ENCODE measurements at regions of chr4 and their contacts with region 1.

Region 1: DNA sequence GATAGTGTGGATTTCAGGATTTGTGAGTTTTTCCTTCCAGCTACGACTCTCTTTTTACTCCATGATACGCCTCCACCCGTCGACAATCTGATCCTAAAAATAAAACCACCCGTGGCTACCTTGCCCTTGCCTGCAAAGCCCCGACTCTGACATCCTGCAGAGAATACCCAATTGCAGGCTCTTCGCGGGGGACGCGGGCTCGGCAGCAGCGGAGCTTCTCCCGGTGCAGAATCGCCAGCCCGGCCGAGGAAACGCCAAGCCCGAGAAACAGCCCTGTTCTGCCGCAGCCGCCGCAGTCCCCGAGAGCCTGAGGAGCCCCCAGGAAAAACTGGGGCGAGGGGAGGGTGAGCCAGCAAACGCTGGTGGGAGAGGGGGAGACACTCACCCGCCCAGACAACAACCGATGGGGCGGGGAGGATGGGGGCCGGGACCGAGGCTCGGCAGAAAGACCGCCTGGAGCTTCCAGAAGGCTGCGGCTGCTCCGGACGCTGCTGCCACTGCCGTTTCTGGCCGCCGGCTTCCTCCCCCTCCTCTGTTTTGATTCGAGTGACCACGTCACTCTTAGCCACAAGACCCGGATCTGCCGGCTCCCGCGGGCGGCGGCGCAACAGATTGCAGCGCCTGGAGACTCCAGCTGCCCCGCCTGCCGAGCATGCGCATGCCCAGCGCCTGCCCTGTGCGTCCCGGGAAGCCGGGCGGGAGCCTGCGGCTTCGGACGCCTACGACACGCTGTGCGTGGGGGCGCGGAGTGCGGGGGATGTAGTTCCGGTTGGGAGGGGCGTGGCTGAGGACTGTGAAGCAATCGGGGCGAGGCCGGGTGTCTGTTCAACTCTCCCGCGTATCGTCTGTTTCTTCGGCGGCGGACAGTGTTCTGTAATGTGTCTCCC is at the start of gene SMIM14:
- DNase-seq: peak; percentile 100
- H3K4me3 ChIP-seq: peak within 1 kb of the TSS; percentile 83 to 95 (median 90)
- H3K27ac ChIP-seq: peak within 1 kb of the TSS; percentile 96 to 100 (median 99)
- H3K4me1 ChIP-seq: peaks cover 2 to 23% (median 19%) of the 10 kb centered on the region in 4 donors
- H3K27me3 ChIP-seq: no peaks in the 10 kb centered on the region
- CTCF ChIP-seq: peak in 1 of 4 experiments; percentile 28
- EP300 ChIP-seq: peak in 2 of 4 donors; percentile 12 to 87
- POLR2A ChIP-seq: peak; percentile 90 to 93
- total RNA-seq, gene SMIM14: 16.6 to 33.9 (median 27.8) TPM

Region 2: GRCh38 chr4:39181905-39182638 is 456.5 kb before region 1 on chr4 and contains the start of gene WDR19:
- intact Hi-C with region 1: loop called (anchors 10 kb)
- DNase-seq: peak; percentile 99
- H3K4me3 ChIP-seq: peak within 1 kb of the TSS; percentile 64 to 83 (median 76)
- H3K27ac ChIP-seq: peak within 1 kb of the TSS; percentile 71 to 80 (median 79)
- H3K4me1 ChIP-seq: peaks cover 0 to 21% (median 14%) of the 10 kb centered on the region in 4 donors
- H3K27me3 ChIP-seq: no peaks in the 10 kb centered on the region
- CTCF ChIP-seq: peak; percentile 41 to 54 (median 46)
- EP300 ChIP-seq: peak in 1 of 4 donors; percentile 47
- POLR2A ChIP-seq: no peak
- total RNA-seq, gene WDR19: 49.9 to 62.0 (median 52.2) TPM

Region 3: GRCh38 chr4:39458505-39459300 is 179.9 kb before region 1 on chr4 and contains the starts of genes LIAS and RPL9:
- intact Hi-C with region 1: loop called (anchors 5 kb)
- DNase-seq: peak; percentile 99
- H3K4me3 ChIP-seq: peak within 1 kb of the TSS; percentile 70 to 79 (median 74)
- H3K27ac ChIP-seq: peak within 1 kb of the TSS; percentile 97 to 98 (median 98)
- H3K4me1 ChIP-seq: peaks cover 0 to 40% (median 36%) of the 10 kb centered on the region in 4 donors
- H3K27me3 ChIP-seq: no peaks in the 10 kb centered on the region
- CTCF ChIP-seq: no peak
- EP300 ChIP-seq: peak in 2 of 4 donors; percentile 46 to 83
- POLR2A ChIP-seq: peak; percentile 93 to 96
- total RNA-seq, gene LIAS: 16.1 to 24.8 (median 18.8) TPM
- total RNA-seq, gene RPL9: 4,848 to 14,511 (median 7,301) TPM

Region 4: DNA sequence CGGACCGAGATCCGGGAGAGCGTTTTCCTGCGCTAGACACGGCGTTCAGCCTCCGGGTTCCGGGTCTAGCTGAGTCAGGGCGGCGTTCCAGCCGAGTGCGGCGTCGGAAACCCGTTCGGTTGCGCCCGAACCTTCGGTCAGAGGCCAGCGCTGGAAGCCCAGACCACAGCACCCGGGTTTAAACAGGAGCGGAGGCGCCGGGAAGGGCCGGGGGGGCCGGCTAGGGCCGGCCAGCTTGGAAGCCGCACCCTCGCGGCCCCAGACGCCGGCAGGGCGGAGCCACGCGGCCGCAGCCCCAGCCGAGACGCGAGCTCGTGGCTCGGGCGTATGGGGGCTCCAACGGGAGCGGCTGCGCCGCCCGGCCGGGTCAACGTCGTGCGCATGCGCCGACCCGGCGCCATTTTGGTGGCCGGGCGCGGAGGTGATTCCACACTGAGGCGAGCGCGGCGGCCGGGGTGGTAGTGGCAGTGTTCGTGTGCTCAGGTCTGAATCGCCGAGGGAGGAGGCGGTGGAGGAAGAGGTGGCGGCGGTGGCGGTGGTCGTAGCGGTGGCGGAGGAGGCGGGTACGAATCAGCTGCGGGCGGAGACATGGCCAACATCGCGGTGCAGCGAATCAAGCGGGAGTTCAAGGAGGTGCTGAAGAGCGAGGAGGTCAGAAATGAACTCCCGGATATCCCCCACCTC is 59.3 kb after region 1 on chr4 and contains the start of gene UBE2K:
- intact Hi-C with region 1: loop called (anchors 2 kb)
- DNase-seq: peak; percentile 94
- H3K4me3 ChIP-seq: peak within 1 kb of the TSS; percentile 86 to 97 (median 88)
- H3K27ac ChIP-seq: peak within 1 kb of the TSS; percentile 93 to 96 (median 94)
- H3K4me1 ChIP-seq: peaks cover 0 to 50% (median 32%) of the 10 kb centered on the region in 4 donors
- H3K27me3 ChIP-seq: no peaks in the 10 kb centered on the region
- CTCF ChIP-seq: no peak
- EP300 ChIP-seq: no peak
- POLR2A ChIP-seq: peak; percentile 60 to 76
- total RNA-seq, gene UBE2K: 25.2 to 37.8 (median 31.4) TPM

Region 5: GRCh38 chr4:39713691-39714090 is 75.1 kb after region 1 on chr4:
- intact Hi-C with region 1: no loop called
- DNase-seq: no peak
- H3K4me3 ChIP-seq: no peak overlapping the region
- H3K27ac ChIP-seq: peak overlapping the region in 1 of 4 donors; percentile 37
- H3K4me1 ChIP-seq: peaks cover 0 to 14% (median 4%) of the 10 kb centered on the region in 4 donors
- H3K27me3 ChIP-seq: no peaks in the 10 kb centered on the region
- CTCF ChIP-seq: no peak
- EP300 ChIP-seq: no peak
- POLR2A ChIP-seq: no peak

Region 6: DNA sequence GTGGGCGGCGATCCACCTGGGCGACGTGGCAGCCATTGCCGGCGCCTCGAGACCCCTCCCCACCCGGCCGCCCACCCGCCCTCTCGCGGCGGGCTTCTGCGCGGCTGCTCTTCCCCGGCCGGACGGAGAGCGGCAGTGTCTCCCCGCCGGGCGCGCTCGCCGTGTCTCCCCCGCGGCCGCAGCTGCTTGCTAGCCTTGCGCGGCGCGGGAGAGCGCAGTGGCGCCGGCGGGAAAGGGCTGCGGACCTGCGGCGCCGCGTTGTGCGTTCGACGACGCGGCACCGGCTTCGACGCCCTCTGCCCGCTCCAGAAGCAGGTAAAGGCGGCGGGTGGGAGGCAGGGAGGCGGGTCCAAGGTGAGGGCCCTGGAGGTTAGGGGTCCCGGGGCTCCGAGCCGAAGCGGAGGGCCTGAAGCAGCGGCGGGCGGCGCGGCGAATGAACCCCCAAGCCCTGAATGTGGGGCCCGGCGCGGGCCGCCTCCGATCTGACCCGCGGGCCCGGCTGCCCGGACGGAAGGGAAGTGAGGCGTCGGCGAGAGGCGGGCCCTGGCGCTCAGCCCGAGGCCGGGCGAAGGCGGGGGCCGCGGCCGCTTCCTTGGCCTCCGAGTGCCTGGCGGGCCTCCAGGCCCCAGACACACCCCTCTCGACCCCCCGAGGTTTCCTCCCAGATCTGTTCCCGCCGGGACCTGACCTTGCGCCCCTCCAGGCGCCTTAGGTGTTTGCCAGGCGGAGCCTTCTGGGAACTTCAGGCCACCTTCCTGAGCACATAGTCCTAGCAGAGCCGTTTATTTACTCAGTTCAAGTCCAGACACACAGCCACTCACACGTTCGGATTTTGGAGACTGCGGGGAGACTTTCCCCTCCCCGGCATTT is 418.4 kb after region 1 on chr4 and contains the start of gene N4BP2:
- intact Hi-C with region 1: loop called (anchors 5 kb)
- DNase-seq: peak; percentile 89
- H3K4me3 ChIP-seq: peak within 1 kb of the TSS; percentile 76 to 88 (median 86)
- H3K27ac ChIP-seq: peak within 1 kb of the TSS; percentile 98 to 100 (median 100)
- H3K4me1 ChIP-seq: peaks cover 0 to 27% (median 21%) of the 10 kb centered on the region in 4 donors
- H3K27me3 ChIP-seq: no peaks in the 10 kb centered on the region
- CTCF ChIP-seq: peak in 3 of 4 experiments; percentile 21 to 72 (median 25)
- EP300 ChIP-seq: no peak
- POLR2A ChIP-seq: peak; percentile 70 to 73
- total RNA-seq, gene N4BP2: 7.9 to 11.9 (median 9.2) TPM

Measured in sigmoid colon (tissue), 7 donors.